SK-N-SH (cell line): ENCODE measurements at regions of chr17 and their contacts with region 1.

Region 1: GRCh38 chr17:39235555-39236449 is 10.1 kb upstream of the STAC2 start:
- DNase-seq: peak; percentile 80
- H3K4me3 ChIP-seq: peak overlapping the region in 1 of 2 experiments; percentile 12; a peak in 1 of 4 replicates
- H3K27ac ChIP-seq: no peak overlapping the region
- H3K4me1 ChIP-seq: peaks cover 7 to 29% of the 10 kb centered on the region in 2 experiments; a peak in 1 of 4 replicates
- H3K27me3 ChIP-seq: no peaks in the 10 kb centered on the region
- CTCF ChIP-seq: peak; percentile 84
- EP300 ChIP-seq: no peak
- RAD21 ChIP-seq: no peak

Region 2: DNA sequence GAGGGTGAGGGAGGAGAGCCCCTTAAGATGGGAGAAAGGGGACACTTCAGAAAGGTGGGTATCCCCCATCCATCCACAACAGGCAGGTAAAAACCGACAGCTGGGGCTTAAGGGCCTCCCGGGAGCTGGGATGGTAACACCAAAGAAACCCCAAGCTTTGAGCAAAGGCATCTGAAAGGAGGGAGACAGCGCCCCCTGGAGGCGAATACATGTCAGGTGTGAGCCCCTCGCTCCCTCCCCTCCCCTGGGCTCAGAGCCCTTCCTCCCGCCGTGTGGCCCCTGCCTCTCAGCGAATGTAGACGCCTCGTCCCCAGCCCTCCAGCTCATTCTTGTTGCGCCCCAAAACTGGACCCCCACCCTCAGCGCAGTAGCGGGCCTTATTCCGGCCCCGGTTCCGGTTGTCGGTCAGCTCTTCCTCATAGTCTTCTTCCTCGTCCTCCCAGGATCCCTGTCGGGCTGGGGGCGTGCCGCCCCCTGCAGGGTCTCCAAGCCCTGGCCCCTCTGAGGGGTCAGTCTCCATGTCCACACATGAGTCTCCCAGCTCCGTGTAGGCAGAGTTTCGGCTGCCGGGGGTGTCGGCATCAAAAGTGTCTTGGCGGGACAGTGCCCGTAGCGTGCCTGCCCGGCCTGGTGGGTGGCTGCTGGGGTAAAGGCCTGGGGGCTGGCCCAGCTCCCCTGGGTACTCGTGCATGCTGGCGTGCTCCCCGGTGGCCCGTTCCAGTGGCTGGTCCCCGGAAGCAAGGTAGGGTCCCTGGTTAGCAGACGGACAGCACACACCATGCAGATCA is 60.7 kb before region 1 on chr17:
- CTCF ChIA-PET with region 1: interaction called, 20 read pairs
- POLR2A ChIA-PET with region 1: no interaction called
- DNase-seq: peak; percentile 93
- H3K4me3 ChIP-seq: no peak overlapping the region
- H3K27ac ChIP-seq: no peak overlapping the region
- H3K4me1 ChIP-seq: no peaks in the 10 kb centered on the region; a peak in 1 of 4 replicates
- H3K27me3 ChIP-seq: no peaks in the 10 kb centered on the region
- CTCF ChIP-seq: peak; percentile 85
- EP300 ChIP-seq: no peak
- RAD21 ChIP-seq: peak; percentile 67

Region 3: GRCh38 chr17:39199820-39200069 is 36.1 kb before region 1 on chr17:
- CTCF ChIA-PET with region 1: interaction called, 781 read pairs
- POLR2A ChIA-PET with region 1: interaction called, 11 read pairs
- DNase-seq: peak; percentile 91
- H3K4me3 ChIP-seq: peak overlapping the region; percentile 75 to 93
- H3K27ac ChIP-seq: peak overlapping the region; percentile 94 to 99
- H3K4me1 ChIP-seq: peaks cover 25 to 42% of the 10 kb centered on the region in 2 experiments; a peak in 2 of 4 replicates
- H3K27me3 ChIP-seq: no peaks in the 10 kb centered on the region
- CTCF ChIP-seq: no peak
- EP300 ChIP-seq: no peak
- RAD21 ChIP-seq: no peak

Region 4: DNA sequence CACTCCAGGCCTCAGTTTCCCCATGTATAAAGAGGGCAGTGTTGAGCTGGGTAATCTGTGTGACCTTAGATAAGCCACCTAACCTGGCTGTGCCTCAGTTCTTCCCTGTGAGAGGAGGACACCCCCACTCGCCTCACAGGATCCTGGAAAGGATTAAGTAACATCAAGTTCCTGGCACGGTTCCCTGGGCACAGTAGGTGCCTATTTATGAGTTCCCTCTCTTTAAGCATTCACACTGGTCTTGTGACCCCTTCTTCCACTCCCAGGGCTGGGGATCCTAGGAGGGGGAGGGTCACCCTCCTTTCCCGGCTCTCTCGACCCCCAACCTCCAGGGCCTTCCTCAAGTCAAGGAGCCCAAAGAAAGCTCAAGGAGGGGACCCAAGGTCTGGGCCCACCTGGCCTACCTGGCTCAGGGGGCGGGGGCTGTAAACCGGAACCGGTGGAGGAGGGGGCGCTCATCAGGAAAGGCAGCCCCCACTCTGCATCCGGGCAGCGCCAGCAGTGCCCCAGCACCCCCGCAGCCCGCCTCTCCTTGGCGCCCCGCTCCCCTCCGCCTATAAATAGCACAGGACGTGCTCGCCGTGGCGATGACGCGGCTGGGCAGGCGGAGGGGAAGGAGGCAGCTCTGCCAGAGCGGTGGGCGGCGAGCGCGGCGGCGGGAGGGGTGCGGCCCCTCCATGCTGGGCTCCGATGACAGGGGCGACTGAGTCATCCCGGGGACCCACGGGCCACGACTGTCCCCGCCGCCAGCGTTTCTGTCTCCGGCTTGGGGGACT is 26.3 kb before region 1 on chr17:
- CTCF ChIA-PET with region 1: interaction called, 781 read pairs
- POLR2A ChIA-PET with region 1: interaction called, 11 read pairs
- DNase-seq: peak; percentile 78
- H3K4me3 ChIP-seq: peak overlapping the region; percentile 38 to 56
- H3K27ac ChIP-seq: no peak overlapping the region
- H3K4me1 ChIP-seq: peaks cover 9% of the 10 kb centered on the region in 2 experiments; a peak in 2 of 4 replicates
- H3K27me3 ChIP-seq: no peaks in the 10 kb centered on the region
- CTCF ChIP-seq: no peak
- EP300 ChIP-seq: no peak
- RAD21 ChIP-seq: no peak

Region 5: DNA sequence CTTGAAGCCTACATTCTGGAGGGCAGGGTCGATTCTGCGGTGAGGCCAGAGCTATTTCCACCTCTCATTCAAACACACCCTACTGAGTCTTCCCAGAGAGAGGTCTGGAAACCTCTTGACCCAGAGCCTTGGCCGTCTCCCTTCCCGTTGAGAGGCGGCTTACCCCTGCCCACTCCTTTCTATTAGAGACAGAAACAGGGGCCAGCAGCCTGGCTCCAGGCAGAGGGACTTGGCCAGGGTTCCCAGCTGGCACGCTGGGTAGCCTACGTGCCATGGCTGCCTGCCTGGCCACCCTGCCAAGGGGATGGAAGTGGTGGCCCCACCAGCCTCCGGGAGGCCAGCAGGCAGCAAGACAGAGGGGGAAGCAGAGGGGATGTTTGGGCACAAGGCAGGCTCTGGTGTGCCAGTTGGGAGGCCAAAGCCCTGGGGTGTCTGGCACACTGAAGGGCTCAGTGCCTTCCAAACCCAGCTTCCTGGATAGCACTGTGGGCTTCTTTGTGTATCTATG is 16.1 kb before region 1 on chr17:
- CTCF ChIA-PET with region 1: interaction called, 781 read pairs
- POLR2A ChIA-PET with region 1: no interaction called
- DNase-seq: no peak
- H3K4me3 ChIP-seq: no peak overlapping the region
- H3K27ac ChIP-seq: no peak overlapping the region
- H3K4me1 ChIP-seq: no peaks in the 10 kb centered on the region
- H3K27me3 ChIP-seq: no peaks in the 10 kb centered on the region
- CTCF ChIP-seq: no peak
- EP300 ChIP-seq: no peak
- RAD21 ChIP-seq: no peak